ENCODE measurements at regions of chr3 and their contacts with region 1.

Region 1: DNA sequence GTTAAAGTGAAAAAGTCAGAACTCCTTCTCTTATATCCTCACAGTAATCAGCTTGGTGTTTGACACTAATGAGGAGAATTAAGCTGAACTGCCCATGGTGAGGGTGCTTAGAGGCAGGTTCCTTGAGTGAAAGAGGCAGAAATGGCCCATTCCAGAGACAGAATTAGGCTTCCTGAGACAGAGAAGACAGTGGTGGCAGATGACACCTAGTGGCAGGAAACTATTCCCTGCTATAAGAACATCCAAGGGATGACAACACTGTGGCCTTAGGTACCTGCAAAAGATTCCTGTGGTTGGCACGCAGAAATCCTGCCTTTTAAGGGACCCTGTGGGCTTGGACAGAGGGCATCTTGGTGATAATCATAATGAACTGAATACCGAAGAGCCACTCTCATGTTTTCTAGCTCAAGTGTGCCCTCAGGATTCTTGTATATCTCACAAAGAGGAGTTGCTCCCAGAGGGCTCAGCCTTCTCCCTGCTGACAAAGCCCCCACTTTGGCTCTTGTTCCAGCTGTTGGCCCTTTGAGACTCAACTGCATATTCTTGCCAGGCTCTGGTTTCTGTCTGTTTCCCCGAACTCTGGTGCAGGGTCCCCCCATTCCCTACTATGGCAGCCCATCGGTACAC is 56.0 kb downstream of the KBTBD12 start:
- DNase-seq: peak; percentile 41
- H3K4me3 ChIP-seq: no peak overlapping the region
- H3K27ac ChIP-seq: no peak overlapping the region
- H3K4me1 ChIP-seq: no peaks in the 10 kb centered on the region
- H3K27me3 ChIP-seq: no peaks in the 10 kb centered on the region
- CTCF ChIP-seq: peak; percentile 83 to 87

Region 2: GRCh38 chr3:127639173-127640030 is 331.7 kb before region 1 on chr3:
- CTCF ChIA-PET with region 1: no interaction called
- dilution Hi-C with region 1: no loop called
- in situ Hi-C with region 1: loop called in 1 of 2 experiments (anchors 10 kb)
- intact Hi-C with region 1: no loop called
- DNase-seq: peak; percentile 65
- H3K4me3 ChIP-seq: no peak overlapping the region
- H3K27ac ChIP-seq: no peak overlapping the region
- H3K4me1 ChIP-seq: peaks cover 3% of the 10 kb centered on the region
- H3K27me3 ChIP-seq: peaks cover 5% of the 10 kb centered on the region
- CTCF ChIP-seq: no peak

Region 3: DNA sequence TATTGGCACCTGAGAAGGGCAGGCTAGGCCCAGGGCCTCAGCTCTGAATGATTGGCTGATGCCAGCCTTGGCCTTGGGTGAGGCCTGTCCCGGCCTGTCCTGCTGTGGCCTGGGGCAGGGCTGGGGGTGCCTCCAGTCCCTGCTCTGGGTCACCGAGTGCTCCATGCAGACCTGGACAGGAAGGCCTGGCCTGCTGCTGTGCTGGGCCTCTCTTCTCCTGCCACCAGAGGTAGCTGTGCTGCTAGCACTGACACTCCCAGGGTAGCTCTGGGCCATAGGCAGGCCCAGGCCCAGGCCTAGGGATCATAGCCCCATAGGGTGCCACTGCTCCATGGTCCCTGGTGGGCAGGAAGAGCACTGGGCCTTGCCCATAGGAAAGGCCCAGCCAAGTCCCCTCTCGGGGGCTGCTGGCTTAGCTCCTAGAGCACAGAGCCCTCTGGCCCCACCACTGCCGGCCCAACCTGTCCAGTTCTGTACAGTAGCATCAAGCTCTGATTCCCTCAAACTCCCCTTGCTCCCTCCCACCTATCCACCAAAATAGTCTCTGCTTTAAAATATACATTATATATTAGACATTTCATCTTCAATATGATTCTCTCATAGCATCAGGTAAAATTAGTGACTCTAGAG is 280.1 kb before region 1 on chr3:
- CTCF ChIA-PET with region 1: interaction called, 9 read pairs
- dilution Hi-C with region 1: no loop called
- in situ Hi-C with region 1: loop called in 1 of 2 experiments (anchors 25 kb)
- intact Hi-C with region 1: loop called (anchors 1 kb)
- DNase-seq: peak; percentile 66
- H3K4me3 ChIP-seq: no peak overlapping the region
- H3K27ac ChIP-seq: peak overlapping the region; percentile 42
- H3K4me1 ChIP-seq: peaks cover 24% of the 10 kb centered on the region
- H3K27me3 ChIP-seq: no peaks in the 10 kb centered on the region
- CTCF ChIP-seq: peak; percentile 76 to 91

Region 4: DNA sequence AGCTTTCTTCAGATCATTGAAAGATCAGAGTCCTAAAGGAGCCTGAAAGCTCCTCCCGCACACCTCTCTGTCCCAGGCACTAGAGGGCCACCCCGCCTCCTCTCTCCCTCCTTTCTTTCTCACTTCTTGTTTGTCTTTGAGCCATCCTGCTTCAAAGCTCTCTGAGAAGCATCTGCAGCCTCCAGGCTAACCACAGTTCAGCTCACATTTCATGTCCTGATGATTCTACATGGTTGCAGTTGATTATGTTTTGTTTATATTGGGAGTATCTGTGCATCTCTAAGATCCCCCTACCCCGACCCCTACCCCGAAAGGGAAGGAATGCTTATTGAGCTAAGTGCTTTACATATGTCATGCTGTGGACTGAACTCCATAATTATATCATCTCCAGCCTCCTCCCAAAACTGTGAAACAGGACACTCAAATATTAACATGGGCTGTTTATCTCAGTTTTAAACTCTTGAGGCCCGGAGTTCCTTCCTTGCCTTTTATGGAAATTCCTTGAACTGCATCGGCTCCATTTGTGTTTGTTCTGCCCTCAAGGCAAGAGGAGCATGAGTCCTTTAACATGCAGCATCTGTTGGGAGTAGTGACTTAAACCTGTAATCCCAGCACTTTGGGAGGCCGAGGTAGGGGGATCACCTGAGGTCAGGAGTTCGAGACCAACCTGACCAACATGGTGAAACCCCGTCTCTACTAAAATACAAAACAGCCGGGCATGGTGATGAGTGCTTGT is 179.7 kb before region 1 on chr3:
- CTCF ChIA-PET with region 1: interaction called, 3 read pairs
- dilution Hi-C with region 1: no loop called
- in situ Hi-C with region 1: no loop called
- intact Hi-C with region 1: loop called (anchors 1 kb)
- DNase-seq: peak; percentile 51
- H3K4me3 ChIP-seq: no peak overlapping the region
- H3K27ac ChIP-seq: no peak overlapping the region
- H3K4me1 ChIP-seq: peaks cover 10% of the 10 kb centered on the region
- H3K27me3 ChIP-seq: no peaks in the 10 kb centered on the region
- CTCF ChIP-seq: peak; percentile 23 to 42

Region 5: DNA sequence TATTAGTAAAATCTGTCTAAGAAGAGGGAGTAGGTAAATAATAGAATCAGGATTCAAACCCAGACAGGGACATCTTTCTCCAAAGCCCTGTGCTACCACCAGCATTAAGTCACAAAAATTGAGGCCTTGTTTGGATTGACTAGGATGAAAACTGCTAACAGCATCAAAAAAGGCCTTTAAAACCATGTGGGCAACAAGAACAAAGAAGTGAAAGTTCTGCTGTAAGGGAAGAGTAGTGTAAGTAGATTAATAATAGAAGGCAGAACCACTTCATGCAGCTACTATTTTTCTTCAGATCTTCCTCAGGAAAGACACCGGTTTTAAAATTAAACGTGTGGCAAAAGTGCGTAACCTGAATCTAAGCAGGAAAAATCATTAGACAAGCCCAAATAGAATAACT is 71.3 kb before region 1 on chr3:
- CTCF ChIA-PET with region 1: no interaction called
- dilution Hi-C with region 1: loop called (anchors 5 kb)
- in situ Hi-C with region 1: no loop called
- intact Hi-C with region 1: no loop called
- DNase-seq: no peak
- H3K4me3 ChIP-seq: no peak overlapping the region
- H3K27ac ChIP-seq: no peak overlapping the region
- H3K4me1 ChIP-seq: no peaks in the 10 kb centered on the region
- H3K27me3 ChIP-seq: no peaks in the 10 kb centered on the region
- CTCF ChIP-seq: no peak

Region 6: GRCh38 chr3:128133273-128134084 is 162.4 kb after region 1 on chr3:
- CTCF ChIA-PET with region 1: no interaction called
- dilution Hi-C with region 1: no loop called
- in situ Hi-C with region 1: no loop called
- intact Hi-C with region 1: loop called (anchors 5 kb)
- DNase-seq: peak; percentile 39
- H3K4me3 ChIP-seq: no peak overlapping the region
- H3K27ac ChIP-seq: no peak overlapping the region
- H3K4me1 ChIP-seq: no peaks in the 10 kb centered on the region
- H3K27me3 ChIP-seq: no peaks in the 10 kb centered on the region
- CTCF ChIP-seq: peak; percentile 41 to 66

Measured in mammary epithelial cell (primary cell).